Naive thymus-derived CD4-positive, alpha-beta T cell (primary cell): ENCODE measurements at regions of chr12 and their contacts with region 1.

Region 1: DNA sequence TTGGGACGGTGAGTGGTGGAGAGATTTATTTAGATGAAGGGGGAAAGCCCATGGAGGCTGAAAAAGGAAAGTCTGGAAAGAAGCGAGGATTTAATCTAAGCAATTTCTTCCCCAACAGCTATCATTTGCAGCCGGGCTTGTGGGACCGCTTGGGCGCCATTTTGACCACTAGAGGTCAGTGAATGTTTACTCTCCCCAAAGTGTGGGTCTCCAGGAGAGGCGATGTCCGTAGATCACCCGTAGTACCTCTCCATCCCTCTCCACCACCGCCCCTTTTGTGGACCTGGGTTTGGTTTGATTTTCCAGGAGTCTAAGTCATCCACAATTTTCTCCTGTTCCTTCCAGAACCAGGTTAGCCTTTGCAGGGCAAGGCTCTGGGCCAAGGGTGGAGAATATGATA is 91.2 kb upstream of the PARP11 start:
- DNase-seq: no peak
- ATAC-seq: no peak
- H3K4me3 ChIP-seq: no peak overlapping the region
- H3K4me3 Mint-ChIP-seq: no peak overlapping the region
- H3K27ac ChIP-seq: no peak overlapping the region
- H3K27ac Mint-ChIP-seq: peak overlapping the region in 4 of 9 donors; percentile 72 to 89 (median 84)
- H3K4me1 ChIP-seq: peaks cover 0 to 20% of the 10 kb centered on the region in 2 donors
- H3K4me1 Mint-ChIP-seq: peaks cover 13 to 47% (median 24%) of the 10 kb centered on the region in 7 donors
- H3K27me3 ChIP-seq: no peaks in the 10 kb centered on the region
- H3K27me3 Mint-ChIP-seq: no peaks in the 10 kb centered on the region

Region 2: DNA sequence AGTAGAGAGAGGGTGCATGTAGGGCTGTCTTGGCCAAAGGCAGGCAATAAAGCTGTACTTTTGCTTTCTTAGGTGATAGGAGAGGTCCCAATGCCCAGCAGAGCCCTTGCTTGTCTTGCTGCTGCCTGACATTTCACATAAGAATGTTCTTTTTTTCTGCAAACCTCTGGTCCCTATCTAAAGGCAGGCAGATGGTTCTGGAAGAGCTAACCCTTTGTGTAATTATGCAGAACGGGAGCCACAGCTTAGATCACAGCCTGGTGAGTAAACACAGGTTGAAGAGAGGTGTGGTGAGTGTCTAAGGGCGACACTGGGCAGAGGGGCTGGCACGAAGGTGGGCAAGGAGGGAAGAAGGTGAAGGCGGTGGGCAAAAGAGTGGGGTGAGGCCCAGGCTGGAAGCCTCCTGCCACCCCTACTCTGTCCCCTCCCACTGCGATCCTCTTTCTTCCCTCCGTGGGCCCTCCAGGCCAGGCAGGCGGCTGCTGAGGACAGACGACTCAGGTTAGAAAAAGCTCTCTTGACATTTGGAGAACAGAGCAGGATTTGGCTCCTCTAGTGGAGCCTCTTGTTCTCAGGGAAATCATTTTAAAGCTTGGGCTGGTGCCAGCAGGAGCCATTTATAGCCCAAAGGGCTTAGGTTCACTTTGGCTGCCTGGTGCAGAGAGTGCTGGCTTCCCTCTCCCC is 430.6 kb before region 1 on chr12:
- CTCF ChIA-PET with region 1: no interaction called
- POLR2A ChIA-PET with region 1: no interaction called
- intact Hi-C with region 1: no loop called
- DNase-seq: no peak
- ATAC-seq: no peak
- H3K4me3 ChIP-seq: no peak overlapping the region
- H3K4me3 Mint-ChIP-seq: no peak overlapping the region
- H3K27ac ChIP-seq: no peak overlapping the region
- H3K27ac Mint-ChIP-seq: no peak overlapping the region
- H3K4me1 ChIP-seq: no peaks in the 10 kb centered on the region
- H3K4me1 Mint-ChIP-seq: no peaks in the 10 kb centered on the region
- H3K27me3 ChIP-seq: no peaks in the 10 kb centered on the region
- H3K27me3 Mint-ChIP-seq: peaks cover 4 to 25% (median 7%) of the 10 kb centered on the region in 5 donors

Region 3: GRCh38 chr12:3891201-3891600 is 73.2 kb before region 1 on chr12:
- CTCF ChIA-PET with region 1: interaction called, 286 read pairs
- POLR2A ChIA-PET with region 1: interaction called, 79 read pairs
- intact Hi-C with region 1: no loop called
- DNase-seq: no peak
- ATAC-seq: no peak
- H3K4me3 ChIP-seq: no peak overlapping the region
- H3K4me3 Mint-ChIP-seq: peak overlapping the region in 1 of 10 donors; percentile 3
- H3K27ac ChIP-seq: no peak overlapping the region
- H3K27ac Mint-ChIP-seq: no peak overlapping the region
- H3K4me1 ChIP-seq: peaks cover 28 to 42% of the 10 kb centered on the region in 2 donors
- H3K4me1 Mint-ChIP-seq: peaks cover 0 to 18% (median 10%) of the 10 kb centered on the region in 7 donors
- H3K27me3 ChIP-seq: no peaks in the 10 kb centered on the region
- H3K27me3 Mint-ChIP-seq: no peaks in the 10 kb centered on the region

Region 4: DNA sequence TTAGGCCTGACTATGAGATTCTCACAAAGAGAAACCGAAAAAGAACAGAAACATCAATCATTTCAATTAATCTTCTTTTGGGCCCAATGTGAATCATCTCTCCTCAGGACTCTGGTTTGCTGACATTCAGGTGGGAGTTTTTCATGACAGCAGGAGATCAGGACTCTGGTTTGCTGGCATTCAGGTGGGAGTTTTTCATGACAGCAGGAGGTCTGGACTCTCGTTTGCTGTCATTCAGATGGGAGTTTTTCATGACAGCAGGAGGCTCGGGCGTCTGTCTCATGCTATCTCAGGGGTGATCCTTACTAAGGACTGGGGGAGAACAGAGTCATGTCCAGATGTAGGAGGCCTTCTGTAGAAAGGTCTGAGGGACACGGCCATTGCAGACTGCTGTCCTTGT is 51.2 kb before region 1 on chr12:
- CTCF ChIA-PET with region 1: interaction called, 13 read pairs
- POLR2A ChIA-PET with region 1: interaction called, 5 read pairs
- intact Hi-C with region 1: no loop called
- DNase-seq: no peak
- ATAC-seq: no peak
- H3K4me3 ChIP-seq: no peak overlapping the region
- H3K4me3 Mint-ChIP-seq: no peak overlapping the region
- H3K27ac ChIP-seq: peak overlapping the region; percentile 14
- H3K27ac Mint-ChIP-seq: peak overlapping the region in 8 of 9 donors; percentile 58 to 91 (median 84)
- H3K4me1 ChIP-seq: peaks cover 0 to 3% of the 10 kb centered on the region in 2 donors
- H3K4me1 Mint-ChIP-seq: peaks cover under 1 to 47% (median 20%) of the 10 kb centered on the region in 7 donors
- H3K27me3 ChIP-seq: no peaks in the 10 kb centered on the region
- H3K27me3 Mint-ChIP-seq: peaks cover 0 to 7% (median 0%) of the 10 kb centered on the region in 5 donors

Region 5: GRCh38 chr12:3947781-3948180 is 16.7 kb before region 1 on chr12:
- CTCF ChIA-PET with region 1: interaction called, 58 read pairs
- POLR2A ChIA-PET with region 1: interaction called, 85 read pairs
- intact Hi-C with region 1: loop called in 1 of 2 experiments (anchors 1 kb)
- DNase-seq: peak in 7 of 9 donors; percentile 64 to 90 (median 82)
- ATAC-seq: peak; percentile 86
- H3K4me3 ChIP-seq: peak overlapping the region; percentile 2
- H3K4me3 Mint-ChIP-seq: peak overlapping the region in 9 of 10 donors; percentile 29 to 77 (median 63)
- H3K27ac ChIP-seq: peak overlapping the region; percentile 78
- H3K27ac Mint-ChIP-seq: peak overlapping the region; percentile 91 to 100 (median 98)
- H3K4me1 ChIP-seq: peaks cover 42 to 56% of the 10 kb centered on the region in 2 donors
- H3K4me1 Mint-ChIP-seq: peaks cover 45 to 78% (median 70%) of the 10 kb centered on the region in 7 donors
- H3K27me3 ChIP-seq: no peaks in the 10 kb centered on the region
- H3K27me3 Mint-ChIP-seq: peaks cover 0 to 17% (median 0%) of the 10 kb centered on the region in 5 donors

Region 6: DNA sequence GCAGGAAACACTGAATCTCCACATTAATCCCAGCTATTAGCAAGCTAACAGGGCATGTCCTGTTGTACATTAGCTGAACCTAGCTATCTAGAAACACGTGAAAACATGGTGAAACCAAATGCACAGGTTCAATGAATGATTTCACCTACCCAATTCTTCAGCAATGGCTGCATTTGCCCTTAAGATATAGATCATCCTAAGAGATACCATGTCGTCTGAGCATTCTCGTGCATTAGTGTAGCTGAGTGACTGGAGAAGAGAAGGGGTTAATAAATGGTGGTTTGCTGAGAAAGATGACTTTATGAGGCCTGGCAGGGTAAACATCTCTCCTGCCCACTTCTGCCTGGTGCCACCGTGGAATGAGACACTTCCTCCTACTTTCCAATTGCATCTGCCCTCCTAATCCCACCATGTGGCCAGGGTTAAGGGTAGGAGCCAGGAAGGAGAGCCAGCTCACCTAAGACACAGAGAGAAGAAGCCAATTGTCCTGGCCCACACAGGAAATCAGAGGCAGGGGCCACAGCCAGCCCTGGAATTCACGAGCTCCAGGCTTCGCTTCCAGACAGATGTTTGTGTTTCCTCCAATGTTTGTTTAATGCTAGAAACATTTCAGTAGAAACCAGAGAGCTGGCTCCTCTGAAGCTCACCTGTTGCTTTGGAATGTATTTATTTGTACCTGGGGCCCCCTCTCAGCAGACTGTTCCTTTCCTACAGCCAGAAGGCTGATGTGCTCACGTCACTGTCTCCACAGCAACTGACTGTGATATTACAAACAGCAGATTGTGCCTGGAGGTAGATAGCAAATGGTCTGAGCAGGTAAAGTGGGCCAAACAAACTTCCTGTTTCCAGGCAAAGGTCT is 34.8 kb after region 1 on chr12:
- CTCF ChIA-PET with region 1: interaction called, 18 read pairs
- POLR2A ChIA-PET with region 1: interaction called, 18 read pairs
- intact Hi-C with region 1: no loop called
- DNase-seq: peak in 5 of 9 donors; percentile 15 to 37 (median 21)
- ATAC-seq: peak; percentile 58
- H3K4me3 ChIP-seq: no peak overlapping the region
- H3K4me3 Mint-ChIP-seq: no peak overlapping the region
- H3K27ac ChIP-seq: no peak overlapping the region
- H3K27ac Mint-ChIP-seq: peak overlapping the region in 3 of 9 donors; percentile 18 to 37 (median 36)
- H3K4me1 ChIP-seq: peaks cover 0 to 11% of the 10 kb centered on the region in 2 donors
- H3K4me1 Mint-ChIP-seq: peaks cover 2 to 49% (median 39%) of the 10 kb centered on the region in 7 donors
- H3K27me3 ChIP-seq: no peaks in the 10 kb centered on the region
- H3K27me3 Mint-ChIP-seq: peaks cover 0 to under 1% (median 0%) of the 10 kb centered on the region in 5 donors